ENCODE measurements at regions of chr17 and their contacts with region 1.

Region 1: DNA sequence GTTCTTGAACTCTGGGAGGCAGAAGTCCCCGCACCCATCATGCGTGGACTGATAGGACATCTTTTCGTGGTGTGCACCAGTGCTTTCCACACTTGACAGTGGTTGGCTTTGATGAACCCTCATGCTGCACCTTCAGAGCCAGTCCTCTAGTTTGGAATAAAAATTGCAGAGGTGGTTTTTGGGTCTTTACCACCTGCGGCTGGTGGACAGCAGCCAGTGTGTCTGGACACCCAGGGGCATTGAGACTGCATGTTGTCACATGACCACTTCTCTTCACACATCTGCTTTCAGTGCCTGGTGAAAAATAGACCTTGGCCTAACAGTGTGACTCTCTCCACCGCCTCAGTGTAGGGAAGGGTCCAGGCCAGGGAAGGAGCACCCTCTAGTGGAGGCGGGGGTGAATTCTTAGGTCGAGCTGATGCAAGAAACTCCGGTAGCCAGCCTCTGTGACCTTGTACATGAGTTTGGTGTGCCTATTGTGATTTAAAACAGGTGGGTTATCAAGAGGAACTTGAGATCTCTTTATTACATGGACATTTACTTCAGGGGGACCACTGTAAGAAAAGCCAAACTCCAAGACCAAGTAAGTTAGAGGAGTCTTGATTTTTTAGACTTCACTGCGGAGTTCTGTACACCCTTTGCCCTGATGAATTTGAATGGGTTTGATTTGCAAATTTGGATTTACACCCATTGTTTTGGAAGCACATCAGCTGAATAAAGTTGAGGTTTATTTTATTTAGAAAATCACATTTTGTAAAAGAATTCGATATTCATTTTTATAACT is 17.9 kb downstream of the GOSR2 start:
- DNase-seq: peak; percentile 72
- H3K4me3 Mint-ChIP-seq: no peak overlapping the region
- H3K27ac Mint-ChIP-seq: no peak overlapping the region
- H3K4me1 Mint-ChIP-seq: no peaks in the 10 kb centered on the region
- H3K27me3 Mint-ChIP-seq: no peaks in the 10 kb centered on the region
- CTCF ChIP-seq: peak; percentile 80

Region 2: GRCh38 chr17:46995841-46996571 is 55.2 kb after region 1 on chr17:
- CTCF ChIA-PET with region 1: interaction called, 3 read pairs
- POLR2A ChIA-PET with region 1: interaction called, 4 read pairs
- intact Hi-C with region 1: loop called (anchors 1 kb)
- DNase-seq: peak; percentile 49
- H3K4me3 Mint-ChIP-seq: no peak overlapping the region
- H3K27ac Mint-ChIP-seq: no peak overlapping the region
- H3K4me1 Mint-ChIP-seq: peaks cover 6% of the 10 kb centered on the region
- H3K27me3 Mint-ChIP-seq: no peaks in the 10 kb centered on the region
- CTCF ChIP-seq: no peak

Measured in MCF 10A (cell line).